ENCODE measurements at regions of chr11 and their contacts with region 1.

Region 1: GRCh38 chr11:15602785-15603567 is 488.3 kb downstream of the INSC start:
- DNase-seq: no peak
- ATAC-seq: peak; percentile 70
- H3K4me3 ChIP-seq: no peak overlapping the region
- H3K27ac ChIP-seq: no peak overlapping the region
- H3K4me1 ChIP-seq: no peaks in the 10 kb centered on the region
- H3K27me3 ChIP-seq: no peaks in the 10 kb centered on the region

Region 2: GRCh38 chr11:15539645-15540044 is 63.3 kb before region 1 on chr11:
- intact Hi-C with region 1: loop called in 1 of 2 experiments (anchors 10 kb)
- DNase-seq: no peak
- ATAC-seq: no peak
- H3K4me3 ChIP-seq: no peak overlapping the region
- H3K27ac ChIP-seq: no peak overlapping the region
- H3K4me1 ChIP-seq: no peaks in the 10 kb centered on the region
- H3K27me3 ChIP-seq: no peaks in the 10 kb centered on the region

Region 3: GRCh38 chr11:16217631-16218030 is 614.7 kb after region 1 on chr11:
- intact Hi-C with region 1: no loop called
- DNase-seq: no peak
- ATAC-seq: no peak
- H3K4me3 ChIP-seq: no peak overlapping the region
- H3K27ac ChIP-seq: no peak overlapping the region
- H3K4me1 ChIP-seq: no peaks in the 10 kb centered on the region
- H3K27me3 ChIP-seq: no peaks in the 10 kb centered on the region